Prostate gland (tissue), 2 donors: ENCODE measurements at regions of chr6 and their contacts with region 1.

Region 1: DNA sequence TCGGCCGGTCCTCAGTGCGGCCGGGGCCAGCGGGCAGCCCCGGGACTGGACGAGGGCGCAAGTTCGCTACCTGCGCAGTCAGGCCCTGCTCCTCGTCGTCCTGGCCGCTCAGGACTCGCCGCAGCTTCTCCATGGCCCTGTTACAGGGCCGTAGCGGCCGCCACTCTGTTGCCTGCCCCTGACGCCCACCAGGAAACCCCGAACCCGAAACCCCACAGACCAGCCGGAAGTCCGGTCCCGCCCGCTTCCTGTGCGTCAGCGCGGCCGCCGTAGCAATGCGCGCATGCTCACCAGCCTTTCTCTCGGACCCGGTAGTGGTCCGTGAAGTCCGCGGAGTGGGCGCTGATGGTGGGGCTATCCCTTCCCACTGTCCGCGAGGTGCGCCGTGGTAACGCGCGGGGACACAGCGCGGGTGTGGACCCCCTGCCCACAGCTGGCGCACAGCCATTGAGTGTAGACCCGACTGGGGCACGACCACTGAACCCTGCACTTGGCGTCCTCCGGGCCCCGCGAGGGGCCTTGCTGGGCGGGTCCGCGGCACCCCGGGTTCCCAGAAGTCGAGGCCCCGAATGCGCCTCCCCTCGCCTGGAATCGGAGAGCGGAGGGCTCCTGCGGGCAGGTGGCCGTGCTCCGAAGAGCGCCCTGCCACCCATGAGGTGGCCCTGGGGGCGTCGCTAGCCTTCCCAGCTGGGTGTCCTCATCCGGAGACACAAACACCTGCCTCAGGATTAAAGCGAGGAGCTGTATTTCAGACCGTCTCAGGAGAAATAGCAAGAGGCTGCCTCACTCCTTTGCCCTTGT is at the start of gene SFT2D1:
- DNase-seq: peak; percentile 78
- H3K4me3 ChIP-seq: peak within 1 kb of the TSS; percentile 80 to 89
- H3K27ac ChIP-seq: peak within 1 kb of the TSS; percentile 85
- H3K4me1 ChIP-seq: peaks cover 16% of the 10 kb centered on the region
- H3K27me3 ChIP-seq: no peaks in the 10 kb centered on the region
- CTCF ChIP-seq: no peak
- POLR2A ChIP-seq: peak; percentile 79
- total RNA-seq, gene SFT2D1: 64.8 to 72.3 TPM

Region 2: DNA sequence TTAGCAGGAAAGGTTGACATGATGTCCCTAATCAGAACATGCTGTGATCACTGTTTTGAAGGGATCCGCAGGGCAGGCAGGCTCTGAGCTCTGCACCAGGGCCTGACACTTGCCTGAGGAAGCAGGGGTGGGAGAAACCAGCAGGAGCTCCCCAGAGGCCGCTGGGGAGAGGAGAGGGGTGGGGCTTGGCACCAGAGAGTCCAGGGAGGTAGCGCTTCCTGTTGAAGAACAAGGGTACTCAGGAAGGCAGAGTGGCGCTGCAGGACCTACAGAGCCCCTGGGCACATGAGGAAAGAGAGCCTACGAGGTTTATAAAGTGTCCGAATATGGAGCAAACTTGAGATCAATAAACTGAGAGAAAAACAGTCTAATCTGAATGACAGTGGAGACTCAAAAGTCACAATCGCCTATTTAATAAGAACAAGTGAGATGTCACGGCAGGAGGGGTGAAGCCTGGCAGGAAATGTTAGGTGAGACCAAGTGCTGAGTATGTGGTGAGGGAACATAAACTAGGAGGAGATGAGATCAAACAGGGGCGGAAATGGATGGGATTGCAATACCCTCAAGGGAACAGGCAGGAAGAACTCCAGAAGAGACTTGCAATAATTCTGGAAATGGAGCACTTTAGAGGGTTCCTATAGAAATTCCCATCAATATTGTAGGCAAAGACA is 169.1 kb before region 1 on chr6:
- intact Hi-C with region 1: no loop called
- DNase-seq: no peak
- H3K4me3 ChIP-seq: no peak overlapping the region
- H3K27ac ChIP-seq: no peak overlapping the region
- H3K4me1 ChIP-seq: no peaks in the 10 kb centered on the region
- H3K27me3 ChIP-seq: peaks cover 17% of the 10 kb centered on the region
- CTCF ChIP-seq: no peak
- POLR2A ChIP-seq: no peak

Region 3: DNA sequence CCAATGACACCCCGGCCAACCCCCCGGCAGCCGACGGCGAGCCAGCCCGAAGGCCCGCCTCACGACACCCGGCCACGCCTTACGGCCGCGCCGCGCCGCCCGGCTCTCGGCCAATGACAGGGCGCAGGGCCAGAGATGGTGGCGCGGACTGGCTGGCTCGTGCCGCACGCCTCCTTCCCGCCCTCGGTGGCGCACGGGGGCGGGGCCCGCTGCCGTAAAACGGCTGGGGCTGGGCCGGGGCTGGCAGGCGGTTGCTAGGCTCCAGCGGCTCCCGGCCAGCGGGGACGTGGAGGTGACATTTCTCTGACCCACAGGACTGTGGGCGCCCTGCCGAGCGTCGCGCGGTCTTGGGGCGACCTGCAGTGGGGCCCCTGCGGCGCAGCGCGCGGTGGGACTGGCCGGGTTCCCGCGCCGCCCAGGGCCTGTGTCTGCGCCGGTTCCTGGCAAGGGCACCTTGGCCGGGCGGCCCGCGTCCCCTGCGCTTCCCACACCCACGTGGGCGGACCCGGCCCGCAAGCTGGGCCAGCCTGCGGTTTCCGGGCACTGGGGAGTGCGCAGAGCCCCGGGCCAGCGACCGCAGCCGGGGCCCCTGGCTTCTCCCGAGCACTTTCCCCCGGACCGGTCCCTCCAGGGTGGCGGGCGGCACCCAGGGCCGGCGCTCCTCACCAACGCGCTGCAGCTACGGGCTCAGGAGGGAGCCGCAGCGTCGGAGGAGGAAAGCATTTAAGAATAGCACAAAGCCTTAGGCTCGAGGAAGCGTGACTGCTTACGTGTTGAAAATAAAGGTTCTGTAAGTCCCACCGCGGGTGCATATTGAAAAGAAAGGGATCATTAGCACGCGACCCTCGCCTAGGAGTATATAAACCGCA is 40.6 kb after region 1 on chr6 and contains the start of gene MPC1:
- intact Hi-C with region 1: loop called (anchors 5 kb)
- DNase-seq: peak; percentile 96
- H3K4me3 ChIP-seq: peak within 1 kb of the TSS; percentile 82 to 86
- H3K27ac ChIP-seq: peak within 1 kb of the TSS; percentile 89 to 92
- H3K4me1 ChIP-seq: no peaks in the 10 kb centered on the region
- H3K27me3 ChIP-seq: no peaks in the 10 kb centered on the region
- CTCF ChIP-seq: peak in 1 of 4 experiments; percentile 14
- POLR2A ChIP-seq: peak; percentile 70
- total RNA-seq, gene MPC1: 25.3 to 58.9 TPM